ENCODE measurements at regions of chr3 and their contacts with region 1.

Region 1: DNA sequence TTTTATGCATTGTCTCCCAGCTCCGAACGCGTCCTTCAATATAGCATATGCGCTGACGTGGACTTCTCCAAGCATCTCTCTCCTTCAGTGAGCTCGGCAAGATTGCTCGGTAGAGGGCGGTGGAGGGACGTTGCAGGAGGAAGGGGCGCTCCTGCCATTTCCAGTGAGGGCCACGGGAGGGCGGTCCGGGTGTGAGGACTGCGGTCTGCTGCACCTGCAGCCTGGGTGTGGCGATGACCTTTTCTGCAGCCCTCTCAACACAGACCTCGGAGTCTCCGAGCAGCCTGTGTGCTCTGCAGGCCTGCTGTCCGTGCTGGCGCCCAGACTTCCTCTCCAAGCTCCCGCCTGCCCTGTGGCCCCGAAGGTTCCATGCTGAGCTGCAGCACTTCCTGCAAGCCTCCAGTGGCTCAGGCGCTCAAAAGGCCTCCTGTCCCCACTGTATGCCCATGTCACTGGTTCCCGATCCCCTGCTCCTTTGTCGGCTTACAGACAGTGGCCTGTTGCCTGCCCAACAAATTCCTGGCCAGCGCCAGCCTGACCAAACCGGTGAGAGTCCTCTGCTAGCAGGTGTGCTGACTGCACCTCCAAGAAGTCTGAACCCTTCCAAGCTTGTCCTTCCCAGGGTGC is 8.9 kb upstream of the RTP3 start:
- DNase-seq: peak; percentile 97
- ATAC-seq: peak; percentile 99
- H3K4me3 Mint-ChIP-seq: peak overlapping the region; percentile 29
- H3K27ac Mint-ChIP-seq: peak overlapping the region; percentile 57
- H3K4me1 Mint-ChIP-seq: peaks cover 25% of the 10 kb centered on the region
- H3K27me3 Mint-ChIP-seq: peaks cover 20% of the 10 kb centered on the region

Region 2: GRCh38 chr3:46406788-46407611 is 81.8 kb before region 1 on chr3 and contains the starts of genes CCR5AS and CCRL2:
- CTCF ChIA-PET with region 1: interaction called, 13 read pairs
- DNase-seq: peak; percentile 81
- ATAC-seq: peak; percentile 90
- H3K4me3 Mint-ChIP-seq: peak within 1 kb of the TSS; percentile 86
- H3K27ac Mint-ChIP-seq: peak within 1 kb of the TSS; percentile 96
- H3K4me1 Mint-ChIP-seq: peaks cover 39% of the 10 kb centered on the region
- H3K27me3 Mint-ChIP-seq: peaks cover 6% of the 10 kb centered on the region
- total RNA-seq, gene CCRL2: 10.0 to 11.9 TPM

Region 3: DNA sequence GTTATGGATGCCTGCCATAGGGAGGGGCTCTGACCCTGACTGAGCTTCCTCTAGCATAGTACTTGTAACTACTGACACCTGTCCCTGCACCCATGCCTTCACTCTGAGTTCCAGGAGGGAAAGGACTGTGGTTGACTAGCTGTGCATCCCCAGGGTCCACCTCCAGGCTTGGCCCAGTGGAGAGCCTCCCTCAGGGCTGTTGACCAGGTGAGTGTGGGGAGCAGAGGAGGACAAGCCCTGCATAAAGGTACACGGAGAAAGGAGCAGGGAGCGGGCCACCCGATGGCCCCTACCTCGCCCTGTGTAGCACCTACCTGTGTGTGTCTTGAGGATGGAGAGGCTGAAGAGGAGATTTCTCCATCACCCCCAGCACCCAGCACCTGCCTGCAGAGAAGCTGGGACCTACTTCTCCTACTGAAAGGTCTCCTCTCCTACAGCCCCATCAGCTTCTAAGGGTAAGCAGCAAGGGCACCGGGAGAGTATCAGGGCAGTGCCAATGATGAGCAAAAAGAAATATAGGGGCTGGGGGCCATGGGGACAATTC is 17.4 kb before region 1 on chr3:
- CTCF ChIA-PET with region 1: interaction called, 12 read pairs
- DNase-seq: peak; percentile 11
- ATAC-seq: no peak
- H3K4me3 Mint-ChIP-seq: no peak overlapping the region
- H3K27ac Mint-ChIP-seq: no peak overlapping the region
- H3K4me1 Mint-ChIP-seq: no peaks in the 10 kb centered on the region
- H3K27me3 Mint-ChIP-seq: peaks cover 41% of the 10 kb centered on the region

Region 4: DNA sequence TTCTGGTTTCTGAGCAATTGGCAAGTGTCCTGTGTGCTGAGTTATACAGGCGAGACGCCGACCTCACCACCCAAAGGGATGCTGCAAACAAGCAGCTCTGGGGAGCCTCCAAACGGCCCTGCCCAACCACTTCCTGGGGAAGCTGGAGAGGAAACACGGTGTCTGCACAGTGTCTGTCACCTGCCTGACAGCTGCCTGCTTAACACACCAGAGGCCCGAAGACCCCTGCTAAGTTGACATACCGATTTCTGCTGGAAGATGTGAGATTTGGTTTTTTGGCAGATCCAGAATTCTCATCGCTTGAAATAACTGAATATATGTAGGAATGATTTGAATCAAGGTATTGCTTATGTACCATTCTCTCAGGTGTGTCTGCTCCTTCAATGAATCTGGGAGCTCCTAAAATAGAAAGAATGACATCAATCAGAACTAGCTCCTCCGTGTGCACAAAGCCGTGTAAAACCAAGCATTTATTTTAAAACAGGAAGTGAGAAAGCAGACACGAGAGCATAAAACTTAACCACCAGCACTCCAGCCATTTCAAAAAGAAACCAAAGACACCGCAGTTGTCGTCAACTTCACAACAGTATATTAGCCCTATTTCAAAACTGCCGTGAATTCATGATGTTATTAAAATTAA is 50.1 kb after region 1 on chr3:
- CTCF ChIA-PET with region 1: interaction called, 117 read pairs
- DNase-seq: peak; percentile 96
- ATAC-seq: peak; percentile 92
- H3K4me3 Mint-ChIP-seq: peak overlapping the region; percentile 64
- H3K27ac Mint-ChIP-seq: peak overlapping the region; percentile 92
- H3K4me1 Mint-ChIP-seq: peaks cover 61% of the 10 kb centered on the region
- H3K27me3 Mint-ChIP-seq: peaks cover 16% of the 10 kb centered on the region

Region 5: DNA sequence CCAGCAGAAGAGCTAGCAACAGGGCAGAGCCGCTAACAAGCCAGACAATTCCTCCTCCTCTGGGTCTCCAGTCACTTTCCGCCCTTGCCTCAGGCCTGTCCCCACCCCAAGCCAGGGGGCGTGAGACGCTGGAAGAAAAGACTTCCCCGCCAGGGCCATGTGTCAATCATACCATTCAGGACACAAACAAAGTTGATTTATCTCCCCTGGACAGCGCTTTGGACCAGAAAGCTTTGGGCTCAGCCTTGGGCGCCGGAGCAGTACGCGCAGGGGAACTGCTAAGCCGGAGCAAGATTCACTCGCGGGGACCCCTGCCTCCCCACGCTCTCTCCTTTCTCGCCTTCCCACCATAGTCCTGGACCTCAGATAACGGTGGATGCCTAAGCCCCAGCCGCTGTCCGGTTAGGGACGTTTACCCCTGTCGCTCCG is 76.8 kb after region 1 on chr3:
- CTCF ChIA-PET with region 1: interaction called, 294 read pairs
- DNase-seq: peak; percentile 35
- ATAC-seq: peak; percentile 12
- H3K4me3 Mint-ChIP-seq: peak overlapping the region; percentile 56
- H3K27ac Mint-ChIP-seq: no peak overlapping the region
- H3K4me1 Mint-ChIP-seq: peaks cover 15% of the 10 kb centered on the region
- H3K27me3 Mint-ChIP-seq: peaks cover 44% of the 10 kb centered on the region

Region 6: DNA sequence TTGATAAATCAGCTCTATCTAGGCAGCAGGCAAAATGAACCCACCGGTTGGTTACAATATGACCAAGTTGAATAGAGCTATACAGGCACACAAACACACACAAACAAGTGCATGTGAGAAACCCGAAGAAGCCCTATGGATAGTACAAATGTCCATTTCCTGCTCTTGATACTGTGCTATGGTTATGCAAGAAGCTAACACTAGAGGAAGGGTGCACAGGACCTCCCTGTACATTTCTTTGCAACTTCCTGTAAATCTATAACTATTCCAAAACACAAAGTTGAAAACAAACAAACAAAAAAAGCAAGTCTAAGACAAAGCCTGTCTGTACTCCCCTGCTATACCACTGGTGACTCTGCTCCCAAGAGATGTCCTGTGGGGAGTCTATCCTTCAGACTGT is 115.3 kb after region 1 on chr3:
- CTCF ChIA-PET with region 1: interaction called, 16 read pairs
- DNase-seq: no peak
- ATAC-seq: no peak
- H3K4me3 Mint-ChIP-seq: no peak overlapping the region
- H3K27ac Mint-ChIP-seq: no peak overlapping the region
- H3K4me1 Mint-ChIP-seq: peaks cover 11% of the 10 kb centered on the region
- H3K27me3 Mint-ChIP-seq: peaks cover 8% of the 10 kb centered on the region

Region 7: GRCh38 chr3:46695177-46695961 is 206.5 kb after region 1 on chr3:
- CTCF ChIA-PET with region 1: interaction called, 11 read pairs
- DNase-seq: peak; percentile 54
- ATAC-seq: no peak
- H3K4me3 Mint-ChIP-seq: no peak overlapping the region
- H3K27ac Mint-ChIP-seq: peak overlapping the region; percentile 14
- H3K4me1 Mint-ChIP-seq: peaks cover 19% of the 10 kb centered on the region
- H3K27me3 Mint-ChIP-seq: peaks cover 24% of the 10 kb centered on the region

Measured in activated CD8-positive, alpha-beta memory T cell treated with anti-CD3 and anti-CD28 coated beads, Interleukin-2, amount 10 ng/mL, durations not matched to agents 7 days and 5 days (primary cell).